ENCODE measurements at regions of chr16 and their contacts with region 1.

Region 1: GRCh38 chr16:4253394-4254150 is 11.7 kb upstream of the SRL start:
- DNase-seq: peak; percentile 99
- CTCF ChIP-seq: no peak

Region 2: GRCh38 chr16:3983081-3983520 is 270.5 kb before region 1 on chr16:
- CTCF ChIA-PET with region 1: interaction called, 14 read pairs
- POLR2A ChIA-PET with region 1: interaction called, 3 read pairs
- DNase-seq: peak; percentile 64
- CTCF ChIP-seq: peak; percentile 71

Region 3: GRCh38 chr16:4200000-4200780 is 53.4 kb before region 1 on chr16:
- CTCF ChIA-PET with region 1: interaction called, 17 read pairs
- POLR2A ChIA-PET with region 1: no interaction called
- DNase-seq: peak; percentile 49
- CTCF ChIP-seq: peak; percentile 47

Region 4: DNA sequence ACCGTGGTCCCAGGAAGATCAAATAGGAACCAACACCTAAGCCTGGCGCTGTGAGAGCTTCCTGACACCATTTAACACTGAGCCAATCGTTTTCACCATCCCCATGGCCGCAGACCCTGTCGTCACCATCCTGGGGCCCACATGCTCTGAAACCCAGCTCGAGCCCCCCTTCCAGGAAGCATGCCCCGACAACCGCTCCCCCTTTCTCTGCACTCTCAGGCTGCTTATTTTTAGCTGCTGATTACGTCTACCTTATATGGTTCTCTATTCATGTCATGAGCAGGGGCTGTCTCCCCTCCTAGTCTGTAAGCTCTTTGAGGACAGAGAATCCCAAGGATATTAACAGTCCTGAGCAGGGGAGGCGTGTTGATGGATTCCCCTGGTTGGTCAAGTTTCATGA is 22.2 kb before region 1 on chr16:
- CTCF ChIA-PET with region 1: interaction called, 70 read pairs
- POLR2A ChIA-PET with region 1: no interaction called
- DNase-seq: no peak
- CTCF ChIP-seq: no peak

Region 5: GRCh38 chr16:4307215-4308037 is 53.9 kb after region 1 on chr16:
- CTCF ChIA-PET with region 1: interaction called, 22 read pairs
- POLR2A ChIA-PET with region 1: interaction called, 6 read pairs
- DNase-seq: peak; percentile 99
- CTCF ChIP-seq: peak; percentile 1

Region 6: GRCh38 chr16:4350787-4351659 is 97.5 kb after region 1 on chr16 and contains the start of gene PAM16:
- CTCF ChIA-PET with region 1: interaction called, 10 read pairs
- POLR2A ChIA-PET with region 1: no interaction called
- DNase-seq: peak; percentile 98
- CTCF ChIP-seq: no peak

Region 7: DNA sequence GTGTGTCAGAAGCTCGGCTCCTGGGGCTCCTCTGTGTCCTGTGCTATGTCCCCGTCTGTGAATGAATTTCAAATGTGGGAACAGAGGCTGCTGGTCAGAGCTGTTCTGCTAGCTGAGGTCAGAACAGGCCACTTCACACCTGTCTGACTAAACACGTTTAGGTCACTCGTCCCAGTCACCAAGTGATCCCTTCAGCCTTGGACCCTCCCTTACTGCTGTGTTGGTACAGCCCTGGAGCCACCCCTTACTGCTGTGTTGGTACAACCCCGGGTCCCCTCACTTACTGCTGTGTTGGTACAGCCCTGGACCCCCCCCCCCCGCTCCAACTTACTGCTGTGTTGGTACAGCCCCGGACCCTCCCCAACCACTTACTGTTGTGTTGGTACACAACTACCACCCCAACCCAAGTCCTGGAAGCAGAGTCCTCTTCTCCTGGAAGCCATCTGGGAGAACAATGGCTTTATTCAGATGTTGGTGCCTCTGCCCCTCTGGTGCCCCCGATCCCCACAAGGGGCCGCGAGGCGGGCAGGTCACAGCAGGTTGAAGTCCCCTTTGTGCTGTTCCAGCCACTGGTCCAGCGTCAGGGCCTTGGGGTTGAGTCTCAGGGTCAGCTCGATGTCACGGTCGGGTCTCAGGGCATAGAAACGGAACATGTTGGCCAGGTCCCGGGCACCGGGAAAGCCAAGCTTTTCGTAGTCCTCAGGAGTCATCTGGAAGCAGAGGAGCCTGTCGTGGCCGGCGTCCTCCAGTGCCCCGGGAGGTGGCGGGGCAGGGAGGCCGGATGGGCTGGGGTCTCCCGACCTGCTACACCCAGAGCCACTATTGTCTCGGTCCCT is 207.9 kb after region 1 on chr16:
- CTCF ChIA-PET with region 1: no interaction called
- POLR2A ChIA-PET with region 1: no interaction called
- DNase-seq: no peak
- CTCF ChIP-seq: no peak